Activated CD8-positive, alpha-beta T cell treated with anti-CD3 and anti-CD28 coated beads for 36 hours (primary cell): ENCODE measurements at regions of chr12 and their contacts with region 1.

Region 1: GRCh38 chr12:110431957-110432587 is 18.1 kb downstream of the ARPC3 start:
- DNase-seq: peak; percentile 39
- ATAC-seq: peak; percentile 40
- H3K4me3 Mint-ChIP-seq: no peak overlapping the region
- H3K27ac Mint-ChIP-seq: no peak overlapping the region
- H3K4me1 Mint-ChIP-seq: peaks cover 5% of the 10 kb centered on the region
- H3K27me3 Mint-ChIP-seq: no peaks in the 10 kb centered on the region
- CTCF ChIP-seq: no peak

Region 2: DNA sequence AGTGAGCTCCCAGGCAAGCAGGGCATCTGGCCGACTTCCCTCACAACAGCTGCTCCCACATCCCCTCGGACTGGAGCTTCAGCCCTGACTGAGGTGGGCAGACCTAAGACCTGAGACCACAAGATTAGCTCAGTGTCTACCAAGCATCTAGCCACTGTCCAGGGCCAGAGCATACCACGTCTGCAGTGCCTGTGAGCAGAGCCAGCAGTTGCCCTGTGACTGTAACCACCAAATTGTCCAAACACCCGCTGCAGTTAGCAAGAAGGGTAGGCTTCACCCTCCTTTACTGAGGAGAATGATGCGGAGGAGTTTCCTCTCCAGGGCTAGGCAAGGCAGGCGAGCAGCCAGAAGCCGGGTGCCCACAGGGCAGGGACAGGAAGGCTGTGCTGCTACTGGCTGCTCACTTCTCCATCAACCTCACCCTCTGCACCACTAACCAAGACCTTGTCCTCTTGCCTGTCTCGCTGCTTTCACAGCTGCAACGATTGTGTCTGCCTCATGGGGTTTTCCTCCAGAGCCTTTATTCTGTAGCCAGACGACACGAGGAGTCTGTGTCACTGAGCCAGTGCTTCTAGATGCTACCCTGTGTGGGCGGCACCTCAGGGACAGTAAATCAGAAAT is 82.4 kb before region 1 on chr12:
- CTCF ChIA-PET with region 1: interaction called, 24 read pairs
- POLR2A ChIA-PET with region 1: no interaction called
- intact Hi-C with region 1: loop called (anchors 2 kb)
- DNase-seq: peak; percentile 80
- ATAC-seq: peak; percentile 89
- H3K4me3 Mint-ChIP-seq: no peak overlapping the region
- H3K27ac Mint-ChIP-seq: peak overlapping the region; percentile 64
- H3K4me1 Mint-ChIP-seq: peaks cover 40% of the 10 kb centered on the region
- H3K27me3 Mint-ChIP-seq: peaks cover 4% of the 10 kb centered on the region
- CTCF ChIP-seq: no peak

Region 3: GRCh38 chr12:110403146-110403975 is 28.7 kb before region 1 on chr12 and contains the start of gene ANAPC7:
- CTCF ChIA-PET with region 1: interaction called, 20 read pairs
- POLR2A ChIA-PET with region 1: interaction called, 3 read pairs
- intact Hi-C with region 1: no loop called
- DNase-seq: peak; percentile 92
- ATAC-seq: peak; percentile 97
- H3K4me3 Mint-ChIP-seq: peak within 1 kb of the TSS; percentile 100
- H3K27ac Mint-ChIP-seq: peak within 1 kb of the TSS; percentile 100
- H3K4me1 Mint-ChIP-seq: peaks cover 24% of the 10 kb centered on the region
- H3K27me3 Mint-ChIP-seq: no peaks in the 10 kb centered on the region
- CTCF ChIP-seq: no peak
- total RNA-seq, gene ANAPC7: 44.9 to 52.9 TPM

Region 4: DNA sequence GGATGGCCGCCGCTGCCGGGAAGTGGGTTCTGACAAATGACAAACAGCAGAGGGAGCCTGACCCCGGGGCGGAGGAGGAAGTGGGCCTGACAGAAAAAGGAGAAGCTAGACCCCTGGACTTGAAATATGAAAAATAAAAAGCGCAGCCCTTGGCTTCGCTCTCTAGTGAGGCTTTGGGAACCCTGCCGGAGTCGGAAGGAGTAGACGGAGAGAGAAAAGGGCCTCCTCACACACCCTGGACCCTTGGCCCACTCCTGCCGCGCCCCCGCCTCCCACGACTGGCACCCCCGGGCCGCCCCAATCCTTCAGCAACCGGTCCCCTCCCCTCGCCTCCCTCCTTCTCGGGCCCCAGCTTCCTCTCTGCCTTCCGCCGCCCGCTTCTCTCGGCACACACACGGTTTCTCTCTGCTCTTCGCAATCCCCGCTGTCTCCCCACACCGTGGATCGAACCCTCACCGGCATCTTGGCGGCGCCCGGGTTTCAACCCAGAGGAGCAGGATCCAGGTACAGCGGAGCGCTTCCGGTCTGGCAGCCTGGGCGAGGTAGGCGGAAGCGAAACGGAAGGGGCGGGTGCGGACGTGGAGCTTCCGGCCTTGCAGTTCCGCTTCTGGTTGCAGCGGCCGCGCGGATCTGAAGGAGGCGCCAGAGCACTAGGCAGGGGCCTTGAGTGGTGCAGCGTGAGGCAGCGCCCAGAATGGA is 17.9 kb after region 1 on chr12 and contains the start of gene ARPC3:
- CTCF ChIA-PET with region 1: interaction called, 71 read pairs
- POLR2A ChIA-PET with region 1: interaction called, 15 read pairs
- intact Hi-C with region 1: no loop called
- DNase-seq: peak; percentile 98
- ATAC-seq: peak; percentile 98
- H3K4me3 Mint-ChIP-seq: peak within 1 kb of the TSS; percentile 87
- H3K27ac Mint-ChIP-seq: peak within 1 kb of the TSS; percentile 100
- H3K4me1 Mint-ChIP-seq: peaks cover 34% of the 10 kb centered on the region
- H3K27me3 Mint-ChIP-seq: no peaks in the 10 kb centered on the region
- CTCF ChIP-seq: peak; percentile 74
- total RNA-seq, gene ARPC3: 229 to 240 TPM

Region 5: DNA sequence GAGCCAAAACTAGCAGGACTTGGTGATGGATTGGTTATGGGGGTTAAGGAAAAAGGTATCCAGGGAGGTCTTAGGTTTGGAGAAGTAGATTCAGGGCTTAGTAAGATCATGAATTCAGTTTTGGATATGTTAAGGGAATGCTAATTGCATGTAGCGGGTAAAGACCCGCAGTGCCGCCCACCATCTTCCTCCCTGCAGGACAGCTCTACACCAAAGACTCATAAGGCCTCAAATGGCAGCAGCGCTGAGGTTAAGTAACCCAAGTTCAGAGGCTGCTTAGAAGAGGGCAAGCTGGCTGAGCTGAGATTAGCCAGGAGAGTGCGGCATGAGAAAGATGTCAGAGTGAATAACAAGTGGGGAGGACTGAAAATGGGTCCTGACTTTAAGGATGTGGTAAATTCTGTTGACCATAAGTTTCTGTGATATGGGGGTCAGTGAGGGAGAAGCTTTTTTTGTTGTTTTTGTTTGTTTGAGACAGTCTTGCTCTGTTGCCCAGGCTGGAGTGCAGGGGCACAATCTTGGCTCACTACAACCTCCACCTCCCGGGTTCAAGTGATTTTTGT is 96.3 kb after region 1 on chr12:
- CTCF ChIA-PET with region 1: no interaction called
- POLR2A ChIA-PET with region 1: no interaction called
- intact Hi-C with region 1: no loop called
- DNase-seq: no peak
- ATAC-seq: no peak
- H3K4me3 Mint-ChIP-seq: no peak overlapping the region
- H3K27ac Mint-ChIP-seq: no peak overlapping the region
- H3K4me1 Mint-ChIP-seq: peaks cover 21% of the 10 kb centered on the region
- H3K27me3 Mint-ChIP-seq: no peaks in the 10 kb centered on the region
- CTCF ChIP-seq: no peak